Dorsolateral prefrontal cortex (tissue), 120 donors: ENCODE measurements at regions of chr11 and their contacts with region 1.

Region 1: DNA sequence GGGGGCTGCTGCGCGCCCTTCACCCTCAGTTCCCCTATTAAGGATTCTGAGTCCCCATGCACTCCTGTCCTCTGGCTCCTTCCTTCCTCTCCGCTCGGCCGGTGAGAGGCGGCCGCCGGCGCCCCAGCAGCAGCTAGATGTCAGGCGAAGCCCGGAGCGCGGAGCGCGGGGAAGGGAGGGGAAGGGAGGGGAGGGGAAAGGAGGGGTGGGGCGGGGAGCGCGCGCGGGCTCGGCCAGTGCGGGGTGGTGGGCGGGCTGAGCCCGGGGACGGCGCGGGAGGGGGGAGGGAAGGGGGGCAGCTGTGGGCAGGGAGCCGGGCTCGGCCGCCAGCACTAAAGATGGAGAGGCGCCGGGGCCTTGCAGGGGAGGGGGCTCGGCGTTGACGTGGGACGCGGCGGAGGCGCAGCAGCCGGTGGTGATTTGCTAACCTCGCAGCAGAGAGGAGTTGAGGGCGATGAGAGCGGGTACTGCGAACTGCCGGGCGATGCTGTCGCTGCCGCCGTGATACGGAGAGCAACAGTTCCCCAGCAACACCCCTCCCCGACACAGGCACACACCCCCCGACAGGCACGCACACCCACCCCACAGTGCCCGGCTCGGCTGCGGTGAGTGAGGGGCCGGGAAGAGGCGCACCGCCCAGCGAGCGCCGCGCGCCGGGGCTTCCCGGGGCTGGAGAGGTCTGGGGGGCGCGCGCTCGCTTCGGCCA is at the start of gene ZBTB16:
- DNase-seq: peak; percentile 79 to 94 (median 90)
- H3K4me3 ChIP-seq: peak within 1 kb of the TSS; percentile 68 to 99 (median 93)
- H3K27ac ChIP-seq: peak within 1 kb of the TSS; percentile 84 to 99 (median 98)
- H3K27me3 ChIP-seq: no peaks in the 10 kb centered on the region
- CTCF ChIP-seq: peak in 53 of 56 donors; percentile 28 to 82 (median 55)
- total RNA-seq, gene ZBTB16: 78.3 to 259 (median 179) TPM

Region 2: DNA sequence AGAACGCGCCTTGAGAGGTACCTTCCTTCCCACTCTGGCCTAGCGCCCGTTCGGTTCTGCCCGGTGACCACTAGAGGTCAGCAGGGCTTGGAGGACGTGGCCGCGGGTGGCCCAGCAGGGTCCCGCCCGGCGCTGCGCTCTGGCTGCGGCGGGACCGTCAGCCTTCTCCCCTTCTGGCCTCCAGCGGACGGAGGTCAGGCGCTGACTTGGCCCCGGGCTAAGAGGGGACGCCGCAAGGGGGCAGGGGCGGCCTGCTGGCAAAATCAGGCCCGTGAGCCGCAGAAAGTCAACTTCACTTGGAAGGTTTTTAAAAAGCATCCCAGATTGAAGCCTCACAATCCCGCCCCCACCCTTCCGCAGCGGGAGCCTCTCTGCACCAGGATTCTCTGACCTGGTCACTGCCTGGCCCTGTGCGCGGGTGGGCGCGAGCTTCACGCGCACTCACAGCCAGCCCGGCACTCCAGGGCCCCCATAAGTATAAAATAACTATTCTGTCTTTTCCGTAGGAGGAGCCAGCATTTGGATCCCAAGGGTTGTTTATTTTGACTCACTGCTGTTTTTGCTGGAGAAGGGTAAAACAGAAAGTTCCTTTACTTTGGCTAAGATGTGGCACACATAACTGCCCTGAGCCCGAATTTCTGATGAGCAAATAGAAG is 23.1 kb before region 1 on chr11:
- intact Hi-C with region 1: loop called in 1 of 2 experiments (anchors 2 kb)
- DNase-seq: peak; percentile 63 to 85 (median 75)
- H3K4me3 ChIP-seq: peak overlapping the region; percentile 18 to 73 (median 55)
- H3K27ac ChIP-seq: peak overlapping the region in 44 of 59 donors; percentile 4 to 81 (median 53)
- H3K27me3 ChIP-seq: no peaks in the 10 kb centered on the region
- CTCF ChIP-seq: peak; percentile 70 to 97 (median 92)

Region 3: GRCh38 chr11:114088836-114089235 is 29.4 kb after region 1 on chr11:
- intact Hi-C with region 1: loop called in 1 of 2 experiments (anchors 1 kb)
- DNase-seq: peak; percentile 31 to 92 (median 87)
- H3K4me3 ChIP-seq: peak overlapping the region in 4 of 59 donors; percentile 1 to 17 (median 14)
- H3K27ac ChIP-seq: peak overlapping the region; percentile 8 to 97 (median 90)
- H3K27me3 ChIP-seq: no peaks in the 10 kb centered on the region
- CTCF ChIP-seq: peak in 3 of 56 donors; percentile 14 to 28 (median 22)

Region 4: DNA sequence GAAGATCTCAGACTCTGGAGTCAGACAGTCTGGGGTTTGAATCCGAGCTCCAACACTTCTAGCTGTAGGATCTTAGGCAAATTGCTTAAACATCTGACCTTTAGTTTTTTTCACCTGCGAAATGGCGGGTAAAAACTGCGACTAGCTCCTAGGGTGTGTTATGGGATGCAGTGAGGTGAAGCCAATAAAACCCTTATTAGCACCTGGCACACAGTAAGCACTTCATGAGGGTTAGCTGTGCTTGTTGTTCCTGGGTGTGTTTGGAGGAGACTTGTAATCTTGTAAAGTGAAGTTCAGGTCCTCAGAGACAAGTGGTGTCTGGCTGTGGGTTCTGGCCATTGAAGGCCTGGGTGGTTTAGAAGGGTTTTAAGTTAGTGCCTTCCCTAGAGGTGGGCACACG is 69.0 kb after region 1 on chr11:
- intact Hi-C with region 1: loop called (anchors 5 to 10 kb)
- DNase-seq: no peak
- H3K4me3 ChIP-seq: peak overlapping the region in 4 of 59 donors; percentile 1 to 32 (median 18)
- H3K27ac ChIP-seq: peak overlapping the region in 57 of 59 donors; percentile 22 to 94 (median 83)
- H3K27me3 ChIP-seq: no peaks in the 10 kb centered on the region
- CTCF ChIP-seq: no peak

Region 5: DNA sequence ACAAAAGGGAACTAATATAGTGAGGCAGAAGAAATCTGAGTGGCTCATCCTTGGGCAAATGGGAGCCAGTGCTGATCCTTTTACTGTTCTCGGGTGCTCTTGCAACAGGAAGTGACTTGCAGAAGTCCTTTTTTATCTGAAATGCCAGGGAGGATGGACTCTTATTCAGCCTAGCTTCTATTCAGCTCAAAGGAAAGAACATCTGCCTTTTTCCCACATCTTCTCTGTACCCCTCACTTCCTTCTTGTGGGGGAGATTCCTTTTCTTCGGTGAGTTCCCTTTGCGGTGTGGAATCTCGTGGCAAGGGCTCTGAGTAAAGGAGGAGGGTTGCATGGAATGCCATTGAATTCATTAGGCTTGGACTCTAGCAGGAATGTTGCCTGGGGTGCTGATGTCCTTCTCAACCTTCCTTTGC is 76.3 kb after region 1 on chr11:
- intact Hi-C with region 1: loop called in 1 of 2 experiments (anchors 10 kb)
- DNase-seq: peak in 1 of 10 donors; percentile 35
- H3K4me3 ChIP-seq: peak overlapping the region in 3 of 59 donors; percentile 2 to 34 (median 3)
- H3K27ac ChIP-seq: peak overlapping the region in 50 of 59 donors; percentile 1 to 94 (median 70)
- H3K27me3 ChIP-seq: no peaks in the 10 kb centered on the region
- CTCF ChIP-seq: no peak

Region 6: GRCh38 chr11:114159802-114160632 is 100.6 kb after region 1 on chr11:
- intact Hi-C with region 1: loop called (anchors 1 to 2 kb)
- DNase-seq: peak; percentile 86 to 97 (median 90)
- H3K4me3 ChIP-seq: peak overlapping the region in 45 of 59 donors; percentile 1 to 48 (median 27)
- H3K27ac ChIP-seq: peak overlapping the region; percentile 97 to 100 (median 100)
- H3K27me3 ChIP-seq: no peaks in the 10 kb centered on the region
- CTCF ChIP-seq: peak in 23 of 56 donors; percentile 5 to 32 (median 19)

Region 7: DNA sequence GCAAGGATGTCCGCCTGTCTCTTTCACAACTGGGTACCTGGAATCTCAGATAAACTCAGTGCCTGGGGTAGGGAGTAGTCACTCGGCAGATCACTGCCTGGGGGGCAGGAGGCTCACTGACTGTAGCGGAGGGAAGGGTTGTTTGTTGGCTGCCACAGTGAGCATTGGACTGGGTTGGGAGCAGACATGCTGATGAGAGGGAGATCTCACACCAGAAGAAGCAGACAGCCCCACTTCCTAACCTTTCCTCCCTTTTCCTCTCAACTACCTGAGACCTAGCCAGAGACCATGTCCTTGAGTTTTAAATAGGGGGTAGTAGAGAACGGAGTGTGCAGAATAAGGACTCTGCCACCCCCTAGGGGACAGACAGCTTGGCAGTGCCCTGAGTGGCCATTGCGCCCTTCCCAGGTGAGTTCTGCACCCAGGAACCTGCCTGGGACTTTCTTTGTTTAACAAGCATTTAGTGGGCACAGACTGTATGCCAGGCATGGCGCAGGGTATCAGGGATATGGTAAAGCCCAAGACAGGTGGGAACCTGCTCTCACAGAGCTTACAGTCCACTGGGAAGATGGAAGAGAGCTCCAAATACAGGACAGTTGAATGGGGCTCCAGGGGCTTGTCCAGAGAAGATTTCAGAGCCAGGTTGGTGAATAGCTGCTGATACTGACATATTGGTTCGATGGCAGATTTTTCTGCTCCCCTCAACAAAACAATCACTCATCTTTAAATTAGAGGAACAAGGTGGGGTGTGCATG is 121.0 kb after region 1 on chr11:
- intact Hi-C with region 1: loop called (anchors 1 to 5 kb)
- DNase-seq: peak in 4 of 10 donors; percentile 41 to 64 (median 58)
- H3K4me3 ChIP-seq: peak overlapping the region in 51 of 59 donors; percentile 7 to 56 (median 33)
- H3K27ac ChIP-seq: peak overlapping the region; percentile 74 to 100 (median 96)
- H3K27me3 ChIP-seq: no peaks in the 10 kb centered on the region
- CTCF ChIP-seq: peak; percentile 19 to 78 (median 66)

Region 8: GRCh38 chr11:114280696-114281095 is 221.3 kb after region 1 on chr11:
- intact Hi-C with region 1: no loop called
- DNase-seq: peak in 2 of 10 donors; percentile 12 to 24
- H3K4me3 ChIP-seq: no peak overlapping the region
- H3K27ac ChIP-seq: no peak overlapping the region
- H3K27me3 ChIP-seq: peaks cover 0 to 12% (median 0%) of the 10 kb centered on the region in 45 donors
- CTCF ChIP-seq: peak in 52 of 56 donors; percentile 12 to 58 (median 42)